Adrenal gland (tissue), 19 donors: ENCODE measurements at regions of chr6 and their contacts with region 1.

Region 1: GRCh38 chr6:50966532-50966931 is 147.9 kb downstream of the TFAP2B start:
- DNase-seq: no peak
- H3K4me3 ChIP-seq: no peak overlapping the region
- H3K27ac ChIP-seq: no peak overlapping the region
- H3K4me1 ChIP-seq: no peaks in the 10 kb centered on the region
- H3K27me3 ChIP-seq: no peaks in the 10 kb centered on the region
- CTCF ChIP-seq: no peak
- POLR2A ChIP-seq: no peak

Region 2: DNA sequence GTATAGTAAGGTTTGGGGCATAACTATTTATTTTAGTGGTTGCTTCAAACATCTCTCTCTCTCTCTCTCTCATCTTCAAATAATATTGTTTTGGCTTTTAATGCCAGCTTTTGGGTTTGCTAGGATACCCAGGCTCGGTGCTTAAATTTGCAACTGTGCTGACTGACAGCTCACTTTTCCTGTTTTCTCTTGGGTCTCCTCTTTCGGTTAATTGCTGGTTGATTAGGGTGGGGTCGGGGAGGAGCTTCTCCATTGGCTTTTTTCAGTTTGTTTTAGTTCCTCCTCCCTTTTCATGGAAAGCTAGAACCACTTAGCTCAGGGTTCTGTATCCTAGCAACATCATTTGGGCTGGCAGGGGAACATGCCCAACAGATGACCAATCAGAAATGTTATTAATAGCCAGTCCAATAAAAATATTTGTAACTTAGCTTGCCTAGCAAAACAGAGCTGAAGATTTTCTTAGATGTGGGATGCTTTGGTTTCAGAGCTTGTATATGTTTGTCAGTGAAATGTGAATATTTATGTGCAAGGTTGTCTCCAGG is 136.6 kb before region 1 on chr6:
- intact Hi-C with region 1: no loop called
- DNase-seq: no peak
- H3K4me3 ChIP-seq: no peak overlapping the region
- H3K27ac ChIP-seq: no peak overlapping the region
- H3K4me1 ChIP-seq: no peaks in the 10 kb centered on the region
- H3K27me3 ChIP-seq: peaks cover 31% of the 10 kb centered on the region
- CTCF ChIP-seq: no peak
- POLR2A ChIP-seq: no peak

Region 3: GRCh38 chr6:52243282-52243893 is 1276.9 kb after region 1 on chr6:
- intact Hi-C with region 1: loop called in 1 of 2 experiments (anchors 10 kb)
- DNase-seq: no peak
- H3K4me3 ChIP-seq: no peak overlapping the region
- H3K27ac ChIP-seq: no peak overlapping the region
- H3K4me1 ChIP-seq: no peaks in the 10 kb centered on the region
- H3K27me3 ChIP-seq: no peaks in the 10 kb centered on the region
- CTCF ChIP-seq: no peak
- POLR2A ChIP-seq: no peak